Heart right ventricle (tissue), 16 donors: ENCODE measurements at regions of chr4 and their contacts with region 1.

Region 1: DNA sequence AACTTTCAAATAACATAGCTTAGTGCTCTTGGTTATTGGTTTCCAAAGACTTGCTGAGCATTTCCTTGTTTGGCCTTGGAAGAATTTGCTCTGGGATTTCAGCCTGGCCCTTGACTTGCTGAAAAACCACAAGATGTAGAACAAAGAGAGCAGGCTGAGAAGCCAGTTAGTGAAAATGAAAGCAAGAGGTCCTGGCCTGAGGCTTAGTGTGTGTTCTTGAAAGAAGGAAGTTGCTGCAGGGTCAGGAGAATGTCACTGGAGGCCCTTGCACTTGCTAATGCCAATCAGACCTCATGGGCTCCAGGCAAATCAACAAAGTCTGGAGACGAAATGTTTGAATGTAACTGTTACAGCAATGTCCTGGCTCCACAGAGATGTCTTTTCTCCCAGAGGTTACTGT is 79.4 kb downstream of the SYNPO2 start:
- DNase-seq: peak in 1 of 2 donors; percentile 58
- ATAC-seq: peak; percentile 70 to 85 (median 77)
- H3K4me3 ChIP-seq: peak overlapping the region in 3 of 10 donors; percentile 6 to 19 (median 10)
- H3K27ac ChIP-seq: peak overlapping the region; percentile 14 to 83 (median 75)
- H3K4me1 ChIP-seq: peaks cover 22 to 91% (median 60%) of the 10 kb centered on the region in 9 donors
- H3K27me3 ChIP-seq: no peaks in the 10 kb centered on the region
- CTCF ChIP-seq: no peak

Region 2: GRCh38 chr4:118746292-118746919 is 221.6 kb before region 1 on chr4:
- intact Hi-C with region 1: loop called in 8 of 10 experiments (anchors 1 to 10 kb)
- DNase-seq: peak in 1 of 2 donors; percentile 68
- ATAC-seq: peak; percentile 76 to 96 (median 89)
- H3K4me3 ChIP-seq: no peak overlapping the region
- H3K27ac ChIP-seq: peak overlapping the region; percentile 28 to 87 (median 74)
- H3K4me1 ChIP-seq: peaks cover 10 to 70% (median 34%) of the 10 kb centered on the region in 9 donors
- H3K27me3 ChIP-seq: no peaks in the 10 kb centered on the region
- CTCF ChIP-seq: no peak

Region 3: GRCh38 chr4:118888666-118889311 is 79.2 kb before region 1 on chr4 and contains the start of gene SYNPO2:
- intact Hi-C with region 1: loop called in 8 of 10 experiments (anchors 1 to 10 kb)
- DNase-seq: peak; percentile 81 to 84
- ATAC-seq: peak; percentile 84 to 94 (median 90)
- H3K4me3 ChIP-seq: peak within 1 kb of the TSS; percentile 34 to 74 (median 66)
- H3K27ac ChIP-seq: peak within 1 kb of the TSS; percentile 78 to 93 (median 85)
- H3K4me1 ChIP-seq: peaks cover 0 to 19% (median 15%) of the 10 kb centered on the region in 9 donors
- H3K27me3 ChIP-seq: peaks cover 0 to 19% (median 0%) of the 10 kb centered on the region in 7 donors
- CTCF ChIP-seq: no peak
- total RNA-seq, gene SYNPO2: 197 to 405 (median 267) TPM

Region 4: DNA sequence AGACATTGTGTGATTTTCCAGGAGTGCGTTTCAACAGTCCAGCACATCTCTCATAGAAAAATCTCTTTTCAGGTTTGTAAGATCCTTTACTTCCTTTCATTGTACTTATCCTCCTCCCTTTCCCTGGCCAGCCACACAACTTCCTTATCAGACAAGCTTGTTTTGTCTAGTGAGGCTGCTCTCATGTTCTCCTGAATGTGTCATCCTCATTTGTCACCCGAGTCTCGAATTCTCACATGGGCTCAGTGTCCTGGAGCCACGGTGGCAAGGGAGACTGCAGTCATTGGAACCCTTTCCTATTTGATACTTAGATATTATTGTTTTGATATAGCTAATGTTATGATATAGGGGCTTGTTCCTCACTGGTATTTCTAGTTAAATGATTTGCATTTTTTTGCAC is 62.4 kb before region 1 on chr4:
- intact Hi-C with region 1: loop called in 1 of 10 experiments (anchors 5 kb)
- DNase-seq: no peak
- ATAC-seq: peak in 6 of 8 donors; percentile 14 to 65 (median 25)
- H3K4me3 ChIP-seq: no peak overlapping the region
- H3K27ac ChIP-seq: peak overlapping the region in 9 of 10 donors; percentile 4 to 89 (median 68)
- H3K4me1 ChIP-seq: peaks cover 4 to 87% (median 54%) of the 10 kb centered on the region in 9 donors
- H3K27me3 ChIP-seq: no peaks in the 10 kb centered on the region
- CTCF ChIP-seq: no peak